CD4-positive, alpha-beta T cell (primary cell): ENCODE measurements at regions of chr16 and their contacts with region 1.

Region 1: DNA sequence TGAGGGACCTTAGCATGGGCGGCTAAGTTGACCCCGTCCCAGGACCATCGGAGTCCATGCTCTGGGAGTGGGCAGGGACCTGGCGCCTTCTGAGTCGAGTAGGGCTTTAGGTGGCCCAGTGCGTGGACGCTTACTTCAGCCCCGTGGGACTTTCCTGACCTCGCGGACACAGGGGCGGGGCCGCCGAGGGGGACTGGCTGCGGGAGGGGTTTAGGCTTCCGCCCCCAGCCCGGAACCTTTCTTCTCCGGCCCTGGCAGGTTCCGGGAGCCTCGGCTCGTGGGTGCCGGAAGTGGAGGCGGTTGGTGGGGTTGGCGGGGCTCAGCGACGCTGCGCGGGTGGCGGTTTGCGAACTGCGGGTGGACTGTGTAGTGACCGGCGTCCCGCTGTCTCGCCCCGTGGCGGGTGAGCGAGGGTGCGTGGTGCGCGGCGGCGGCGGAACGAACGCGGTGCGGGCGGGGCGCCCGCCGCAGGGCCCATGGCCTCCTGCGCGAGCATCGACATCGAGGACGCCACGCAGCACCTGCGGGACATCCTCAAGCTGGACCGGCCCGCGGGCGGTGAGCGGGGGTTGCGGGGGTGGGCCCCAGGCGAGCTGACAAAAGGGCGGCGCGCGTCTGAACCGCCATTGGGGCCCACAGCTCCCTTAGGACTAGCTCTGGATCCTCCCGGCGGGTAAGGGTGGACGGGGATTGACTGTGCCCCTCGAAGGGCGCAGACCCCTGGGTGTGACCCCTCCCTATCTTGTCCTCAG is at the start of gene EDC4:
- DNase-seq: peak; percentile 77 to 92 (median 84)
- ATAC-seq: peak; percentile 93
- H3K4me3 ChIP-seq: peak within 1 kb of the TSS; percentile 99
- H3K4me3 Mint-ChIP-seq: peak within 1 kb of the TSS; percentile 96
- H3K27ac ChIP-seq: peak within 1 kb of the TSS; percentile 82 to 93
- H3K27ac Mint-ChIP-seq: peak within 1 kb of the TSS; percentile 89
- H3K4me1 ChIP-seq: peaks cover 44% of the 10 kb centered on the region
- H3K4me1 Mint-ChIP-seq: peaks cover 35% of the 10 kb centered on the region
- H3K27me3 ChIP-seq: no peaks in the 10 kb centered on the region
- H3K27me3 Mint-ChIP-seq: no peaks in the 10 kb centered on the region
- CTCF ChIP-seq: no peak
- total RNA-seq, gene EDC4: 134 to 145 TPM

Region 2: DNA sequence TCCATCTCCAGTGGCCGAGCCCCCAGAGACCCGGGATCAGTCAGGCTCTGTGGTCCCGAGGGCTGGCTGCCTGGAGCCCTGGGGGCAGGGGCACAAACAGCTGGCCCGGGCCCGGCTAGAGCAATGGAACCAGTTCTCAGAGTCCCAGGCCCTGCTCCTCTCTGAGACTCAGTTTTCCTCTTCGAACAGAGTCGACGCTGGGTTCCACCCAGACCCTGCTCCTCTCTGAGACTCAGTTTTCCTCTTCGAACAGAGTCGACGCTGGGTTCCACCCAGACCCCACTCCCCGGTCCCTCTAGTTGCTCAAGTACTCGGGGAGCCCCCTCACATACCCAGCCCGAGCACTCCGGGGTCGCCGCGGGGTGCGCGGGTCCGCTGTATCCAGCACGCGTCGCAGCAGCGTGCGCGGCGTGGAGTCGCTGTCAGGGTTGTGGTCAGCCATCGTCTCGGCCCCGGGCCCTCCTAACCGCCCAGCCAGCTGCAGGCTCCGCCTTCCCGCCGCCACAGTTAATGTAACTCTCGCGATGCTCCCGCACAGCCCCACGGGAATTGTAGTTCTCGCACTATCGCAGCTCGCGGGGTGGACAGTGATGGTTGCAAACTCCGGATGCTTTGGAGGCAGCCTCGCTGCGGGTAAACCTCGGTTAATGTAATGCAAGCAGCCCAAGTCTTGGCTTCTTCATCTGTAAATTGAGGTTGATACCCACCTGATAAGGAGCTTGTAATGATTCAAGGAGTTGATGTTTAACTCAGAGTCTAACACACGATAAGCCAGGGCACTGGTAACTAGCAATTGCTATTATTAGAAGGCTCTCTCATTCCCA is 39.3 kb before region 1 on chr16:
- CTCF ChIA-PET with region 1: no interaction called
- POLR2A ChIA-PET with region 1: interaction called, 9 read pairs
- intact Hi-C with region 1: loop called in 1 of 2 experiments (anchors 5 kb)
- DNase-seq: peak; percentile 87 to 95 (median 91)
- ATAC-seq: peak; percentile 99
- H3K4me3 ChIP-seq: peak overlapping the region; percentile 87
- H3K4me3 Mint-ChIP-seq: peak overlapping the region; percentile 93
- H3K27ac ChIP-seq: peak overlapping the region in 1 of 2 donors; percentile 34
- H3K27ac Mint-ChIP-seq: peak overlapping the region; percentile 72
- H3K4me1 ChIP-seq: peaks cover 20% of the 10 kb centered on the region
- H3K4me1 Mint-ChIP-seq: peaks cover 20% of the 10 kb centered on the region
- H3K27me3 ChIP-seq: no peaks in the 10 kb centered on the region
- H3K27me3 Mint-ChIP-seq: no peaks in the 10 kb centered on the region
- CTCF ChIP-seq: no peak

Region 3: GRCh38 chr16:67841764-67842508 is 31.0 kb before region 1 on chr16 and contains the start of gene THAP11:
- CTCF ChIA-PET with region 1: interaction called, 4 read pairs
- POLR2A ChIA-PET with region 1: interaction called, 9 read pairs
- intact Hi-C with region 1: loop called in 1 of 2 experiments (anchors 1 kb)
- DNase-seq: peak; percentile 90 to 97 (median 94)
- ATAC-seq: peak; percentile 55
- H3K4me3 ChIP-seq: peak within 1 kb of the TSS; percentile 96
- H3K4me3 Mint-ChIP-seq: peak within 1 kb of the TSS; percentile 98
- H3K27ac ChIP-seq: peak within 1 kb of the TSS; percentile 87 to 99
- H3K27ac Mint-ChIP-seq: peak within 1 kb of the TSS; percentile 95
- H3K4me1 ChIP-seq: peaks cover 50% of the 10 kb centered on the region
- H3K4me1 Mint-ChIP-seq: peaks cover 42% of the 10 kb centered on the region
- H3K27me3 ChIP-seq: no peaks in the 10 kb centered on the region
- H3K27me3 Mint-ChIP-seq: no peaks in the 10 kb centered on the region
- CTCF ChIP-seq: peak; percentile 85
- total RNA-seq, gene THAP11: 31.2 to 32.1 TPM

Region 4: GRCh38 chr16:67883872-67884261 is 10.9 kb after region 1 on chr16:
- CTCF ChIA-PET with region 1: interaction called, 13 read pairs
- POLR2A ChIA-PET with region 1: interaction called, 4 read pairs
- intact Hi-C with region 1: no loop called
- DNase-seq: peak; percentile 60 to 85 (median 72)
- ATAC-seq: peak; percentile 88
- H3K4me3 ChIP-seq: no peak overlapping the region
- H3K4me3 Mint-ChIP-seq: no peak overlapping the region
- H3K27ac ChIP-seq: no peak overlapping the region
- H3K27ac Mint-ChIP-seq: no peak overlapping the region
- H3K4me1 ChIP-seq: no peaks in the 10 kb centered on the region
- H3K4me1 Mint-ChIP-seq: no peaks in the 10 kb centered on the region
- H3K27me3 ChIP-seq: no peaks in the 10 kb centered on the region
- H3K27me3 Mint-ChIP-seq: no peaks in the 10 kb centered on the region
- CTCF ChIP-seq: peak; percentile 91

Region 5: DNA sequence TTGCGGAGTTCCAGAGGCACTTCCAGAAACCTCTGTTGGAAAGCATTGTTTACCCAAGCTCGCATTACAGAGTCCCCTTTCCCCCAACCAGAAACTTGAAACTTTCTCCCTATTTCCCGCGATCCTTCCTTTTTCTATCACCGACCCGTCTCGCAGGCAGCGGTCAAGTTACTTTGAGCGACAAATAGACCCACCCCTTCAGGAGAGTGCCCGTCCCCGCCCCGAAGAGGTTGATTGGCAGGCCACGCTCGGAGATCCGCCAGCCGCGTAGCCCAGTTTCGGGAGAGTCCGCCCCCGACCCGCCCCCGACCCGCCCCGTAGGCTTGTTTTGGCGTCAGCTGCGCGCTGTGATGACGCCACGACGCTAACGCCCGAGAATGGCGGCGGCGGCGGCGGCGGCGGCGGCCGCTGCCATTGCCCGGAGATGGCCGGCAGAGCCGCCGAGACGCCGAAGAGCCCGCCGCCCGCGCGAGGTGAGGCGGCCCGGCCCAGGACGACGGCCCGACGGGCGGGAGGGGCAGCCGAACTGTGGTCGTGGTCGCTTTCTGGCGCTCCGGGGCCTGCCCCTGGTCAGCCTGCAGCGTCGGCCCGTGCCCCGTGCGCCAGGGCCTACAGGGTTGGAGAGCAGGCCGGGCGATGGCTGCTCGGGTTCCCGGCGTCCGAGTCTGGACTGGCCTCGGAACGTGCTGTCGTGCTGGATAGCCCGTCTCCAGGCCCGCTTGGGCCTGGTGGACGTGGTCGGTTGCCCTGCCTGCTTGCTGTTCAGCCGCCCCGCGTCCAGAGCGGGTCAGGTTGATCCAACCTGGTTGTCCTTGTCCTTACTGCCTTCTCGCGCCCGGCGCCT is 20.2 kb after region 1 on chr16 and contains the start of gene PSKH1:
- CTCF ChIA-PET with region 1: no interaction called
- POLR2A ChIA-PET with region 1: interaction called, 7 read pairs
- intact Hi-C with region 1: loop called in 1 of 2 experiments (anchors 2 kb)
- DNase-seq: peak; percentile 87 to 98 (median 92)
- ATAC-seq: peak; percentile 98
- H3K4me3 ChIP-seq: peak within 1 kb of the TSS; percentile 83
- H3K4me3 Mint-ChIP-seq: peak within 1 kb of the TSS; percentile 98
- H3K27ac ChIP-seq: peak within 1 kb of the TSS; percentile 82 to 83
- H3K27ac Mint-ChIP-seq: peak within 1 kb of the TSS; percentile 94
- H3K4me1 ChIP-seq: peaks cover 29% of the 10 kb centered on the region
- H3K4me1 Mint-ChIP-seq: peaks cover 37% of the 10 kb centered on the region
- H3K27me3 ChIP-seq: no peaks in the 10 kb centered on the region
- H3K27me3 Mint-ChIP-seq: no peaks in the 10 kb centered on the region
- CTCF ChIP-seq: no peak
- total RNA-seq, gene PSKH1: 11.4 to 13.3 TPM